Activated B cell treated with CpG ODN at 0.5 μM for 24 hours (primary cell): ENCODE measurements at regions of chr6 and their contacts with region 1.

Region 1: GRCh38 chr6:90184334-90185298 is 112.0 kb downstream of the BACH2 start:
- DNase-seq: no peak
- ATAC-seq: peak; percentile 26
- H3K4me3 Mint-ChIP-seq: peak overlapping the region; percentile 69
- H3K27ac Mint-ChIP-seq: peak overlapping the region; percentile 89
- H3K4me1 Mint-ChIP-seq: peaks cover 70% of the 10 kb centered on the region
- H3K27me3 Mint-ChIP-seq: no peaks in the 10 kb centered on the region
- CTCF ChIP-seq: no peak

Region 2: GRCh38 chr6:89582669-89583325 is 601.8 kb before region 1 on chr6:
- CTCF ChIA-PET with region 1: no interaction called
- POLR2A ChIA-PET with region 1: no interaction called
- intact Hi-C with region 1: no loop called
- DNase-seq: no peak
- ATAC-seq: no peak
- H3K4me3 Mint-ChIP-seq: no peak overlapping the region
- H3K27ac Mint-ChIP-seq: no peak overlapping the region
- H3K4me1 Mint-ChIP-seq: no peaks in the 10 kb centered on the region
- H3K27me3 Mint-ChIP-seq: no peaks in the 10 kb centered on the region
- CTCF ChIP-seq: no peak

Region 3: DNA sequence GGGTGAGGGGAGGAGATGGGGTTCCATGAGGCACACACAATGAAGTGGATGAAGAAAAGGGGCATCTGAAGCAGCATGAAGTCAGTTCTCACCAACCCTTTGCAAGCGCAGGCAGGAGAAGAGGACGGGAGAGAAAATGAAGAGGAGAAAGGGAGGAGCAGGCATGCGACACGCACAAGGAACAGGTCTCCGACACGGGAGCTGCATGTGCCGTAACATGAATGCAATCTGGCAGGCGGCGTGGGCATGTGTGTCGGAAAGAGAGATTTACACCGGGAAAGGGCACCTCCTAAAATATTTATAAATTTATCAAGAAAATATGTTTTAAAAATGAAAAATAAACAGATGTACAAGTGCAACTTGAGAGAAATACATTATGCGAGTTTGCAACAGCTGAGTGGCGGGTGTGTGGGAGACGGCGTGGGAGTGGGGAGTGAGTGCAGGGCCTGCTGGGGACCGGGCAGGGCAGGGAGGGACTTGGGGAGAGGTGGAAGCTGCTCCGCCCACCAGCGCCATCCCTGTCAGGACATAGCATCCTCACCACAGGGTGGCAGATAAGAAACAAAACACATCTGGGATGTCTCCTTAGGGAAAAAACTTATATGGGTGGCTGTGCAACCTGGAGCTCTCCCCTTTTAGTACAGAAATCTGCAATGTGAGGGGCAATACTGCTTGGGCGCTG is 249.8 kb before region 1 on chr6:
- CTCF ChIA-PET with region 1: no interaction called
- POLR2A ChIA-PET with region 1: no interaction called
- intact Hi-C with region 1: no loop called
- DNase-seq: no peak
- ATAC-seq: no peak
- H3K4me3 Mint-ChIP-seq: no peak overlapping the region
- H3K27ac Mint-ChIP-seq: no peak overlapping the region
- H3K4me1 Mint-ChIP-seq: no peaks in the 10 kb centered on the region
- H3K27me3 Mint-ChIP-seq: no peaks in the 10 kb centered on the region
- CTCF ChIP-seq: no peak

Region 4: GRCh38 chr6:90197854-90198496 is 13.4 kb after region 1 on chr6:
- CTCF ChIA-PET with region 1: no interaction called
- POLR2A ChIA-PET with region 1: interaction called, 11 read pairs
- intact Hi-C with region 1: loop called (anchors 2 kb)
- DNase-seq: no peak
- ATAC-seq: no peak
- H3K4me3 Mint-ChIP-seq: no peak overlapping the region
- H3K27ac Mint-ChIP-seq: peak overlapping the region; percentile 81
- H3K4me1 Mint-ChIP-seq: peaks cover 66% of the 10 kb centered on the region
- H3K27me3 Mint-ChIP-seq: no peaks in the 10 kb centered on the region
- CTCF ChIP-seq: no peak

Region 5: DNA sequence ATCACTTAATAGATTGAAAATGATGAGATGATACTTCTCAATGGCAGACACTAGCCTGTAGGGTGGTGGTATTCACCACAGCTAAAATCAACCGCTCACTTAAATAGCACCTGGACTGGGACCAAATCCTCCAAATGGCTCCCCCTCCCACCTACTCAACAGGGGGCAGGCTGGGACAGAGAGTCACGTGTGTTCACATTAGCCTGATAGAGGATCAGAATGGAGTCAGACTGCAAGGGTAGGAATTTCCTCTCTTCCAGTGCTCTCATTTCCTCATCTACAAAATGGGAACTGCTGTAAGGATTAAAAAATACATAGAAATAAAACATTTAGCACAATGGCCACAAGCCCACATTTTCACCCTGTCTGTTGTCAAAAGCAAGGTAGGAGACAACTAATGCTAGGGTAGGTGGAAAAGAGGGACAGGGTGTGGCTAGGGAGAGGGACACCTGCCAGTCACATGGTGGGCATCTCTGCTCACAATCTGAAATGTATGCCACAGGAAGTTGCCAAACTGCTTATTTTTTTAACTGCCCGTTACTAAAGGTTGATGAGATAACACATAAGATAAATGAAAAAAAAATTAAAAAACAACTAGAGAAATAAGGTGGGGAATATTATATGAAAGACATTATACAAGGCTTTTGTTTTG is 56.7 kb after region 1 on chr6:
- CTCF ChIA-PET with region 1: no interaction called
- POLR2A ChIA-PET with region 1: interaction called, 10 read pairs
- intact Hi-C with region 1: no loop called
- DNase-seq: no peak
- ATAC-seq: no peak
- H3K4me3 Mint-ChIP-seq: no peak overlapping the region
- H3K27ac Mint-ChIP-seq: peak overlapping the region; percentile 69
- H3K4me1 Mint-ChIP-seq: peaks cover 36% of the 10 kb centered on the region
- H3K27me3 Mint-ChIP-seq: no peaks in the 10 kb centered on the region
- CTCF ChIP-seq: no peak

Region 6: DNA sequence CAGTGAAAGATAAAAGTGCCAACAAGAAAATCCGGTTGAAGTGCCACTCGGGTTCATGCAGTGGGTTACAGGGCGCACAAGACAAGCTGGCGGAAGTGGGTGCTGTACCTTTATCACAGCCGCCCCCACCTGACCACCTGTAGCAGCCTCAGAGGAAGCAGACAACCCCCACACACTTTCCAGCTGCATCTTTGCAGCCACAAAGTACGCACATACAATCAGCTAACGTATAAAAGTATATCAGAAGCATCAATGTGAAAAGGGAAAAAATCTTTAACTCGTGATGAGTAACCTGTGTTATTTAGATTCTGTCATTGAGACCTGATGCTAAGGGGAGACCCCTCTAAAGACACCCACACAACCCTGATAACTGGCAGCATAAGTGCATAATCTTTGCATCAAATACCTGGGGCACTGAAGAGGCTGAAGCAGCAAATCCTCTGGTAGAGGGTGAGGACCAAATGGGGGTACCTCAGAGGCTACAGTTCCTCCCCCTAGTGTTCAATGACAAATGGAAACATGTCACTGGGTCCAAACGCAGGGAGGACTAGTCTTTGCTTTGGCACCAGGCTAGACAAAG is 89.9 kb after region 1 on chr6:
- CTCF ChIA-PET with region 1: no interaction called
- POLR2A ChIA-PET with region 1: interaction called, 11 read pairs
- intact Hi-C with region 1: no loop called
- DNase-seq: peak; percentile 43
- ATAC-seq: peak; percentile 84
- H3K4me3 Mint-ChIP-seq: peak overlapping the region; percentile 64
- H3K27ac Mint-ChIP-seq: peak overlapping the region; percentile 85
- H3K4me1 Mint-ChIP-seq: peaks cover 93% of the 10 kb centered on the region
- H3K27me3 Mint-ChIP-seq: no peaks in the 10 kb centered on the region
- CTCF ChIP-seq: no peak

Region 7: GRCh38 chr6:91081452-91082067 is 896.9 kb after region 1 on chr6:
- CTCF ChIA-PET with region 1: no interaction called
- POLR2A ChIA-PET with region 1: no interaction called
- intact Hi-C with region 1: no loop called
- DNase-seq: no peak
- ATAC-seq: no peak
- H3K4me3 Mint-ChIP-seq: no peak overlapping the region
- H3K27ac Mint-ChIP-seq: no peak overlapping the region
- H3K4me1 Mint-ChIP-seq: no peaks in the 10 kb centered on the region
- H3K27me3 Mint-ChIP-seq: no peaks in the 10 kb centered on the region
- CTCF ChIP-seq: no peak